Natural killer cell (primary cell): ENCODE measurements at regions of chr6 and their contacts with region 1.

Region 1: DNA sequence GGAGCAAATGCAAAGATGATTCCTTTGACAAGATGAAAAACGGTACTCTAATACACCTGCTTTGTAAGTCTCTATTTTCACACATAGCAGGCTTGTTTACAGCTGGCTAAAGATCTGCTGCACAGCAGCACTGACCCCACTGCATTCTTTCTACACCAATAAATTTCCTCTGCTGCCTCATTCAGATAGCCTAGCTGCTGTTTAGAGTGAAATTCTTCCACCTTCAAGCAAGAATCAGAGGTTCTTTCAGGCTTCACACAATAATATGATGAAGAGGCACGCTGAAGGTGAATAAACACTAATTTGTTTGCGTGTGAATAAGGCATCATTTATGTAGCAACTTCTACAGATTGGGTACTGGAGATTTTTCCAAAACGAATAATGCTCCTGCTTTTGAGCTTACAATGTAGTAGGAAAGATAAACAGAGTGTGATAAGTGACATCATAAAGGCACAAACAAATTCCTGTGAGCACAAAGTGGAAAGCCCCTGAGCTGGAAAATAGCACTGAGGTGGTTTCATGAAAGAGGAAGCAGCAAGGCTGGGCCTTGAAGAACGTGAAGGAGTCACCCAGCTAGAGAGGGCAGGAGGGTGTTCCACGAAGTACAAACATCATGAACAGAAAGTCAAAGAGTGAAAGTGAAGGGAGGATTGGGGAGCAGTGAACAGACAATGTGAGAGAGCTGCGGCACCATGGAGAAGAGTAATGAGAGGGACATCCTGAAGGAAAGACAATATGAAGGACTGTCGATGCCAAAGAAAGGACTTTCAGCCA is 543.4 kb downstream of the CD83 start:
- DNase-seq: peak in 1 of 2 donors; percentile 76
- ATAC-seq: peak; percentile 65 to 75 (median 66)
- H3K4me3 ChIP-seq: no peak overlapping the region
- H3K4me3 Mint-ChIP-seq: no peak overlapping the region
- H3K27ac ChIP-seq: peak overlapping the region; percentile 91
- H3K27ac Mint-ChIP-seq: no peak overlapping the region
- H3K4me1 ChIP-seq: peaks cover 49% of the 10 kb centered on the region
- H3K4me1 Mint-ChIP-seq: peaks cover 27 to 33% of the 10 kb centered on the region in 2 donors
- H3K27me3 ChIP-seq: no peaks in the 10 kb centered on the region
- H3K27me3 Mint-ChIP-seq: peaks cover 10 to 13% of the 10 kb centered on the region in 2 donors
- CTCF ChIP-seq: no peak

Region 2: DNA sequence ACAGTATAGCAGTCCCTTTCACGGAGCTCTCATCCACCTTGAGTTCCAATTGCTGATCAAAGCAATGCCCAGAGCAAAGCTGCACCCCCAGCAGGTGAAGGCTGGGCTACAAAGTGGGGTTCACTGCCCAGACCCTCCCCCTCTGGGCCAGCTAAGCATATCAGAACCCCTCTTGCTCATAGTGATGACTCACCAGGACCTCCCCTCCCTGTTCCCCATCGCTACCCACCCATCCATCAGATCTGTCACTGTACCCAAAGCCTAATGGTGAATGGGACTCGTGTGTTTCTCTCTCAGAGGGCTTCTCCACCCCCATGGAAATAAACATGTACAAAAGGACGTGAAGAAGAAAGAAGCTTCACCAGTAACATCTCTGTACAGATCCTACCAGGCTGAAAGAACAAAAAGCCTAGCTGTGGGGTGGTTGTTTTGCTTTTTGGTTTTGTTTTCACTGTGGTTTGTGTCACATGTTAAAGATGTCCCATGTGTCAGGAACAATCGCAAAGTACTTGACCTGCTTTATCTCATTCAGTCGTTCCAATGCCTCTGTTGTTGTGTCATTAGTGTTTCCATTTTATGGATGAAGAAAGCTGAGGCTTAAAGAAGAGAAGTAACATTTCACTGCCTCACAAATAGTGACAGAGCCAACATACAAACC is 24.9 kb before region 1 on chr6:
- intact Hi-C with region 1: loop called (anchors 2 kb)
- DNase-seq: peak in 1 of 2 donors; percentile 62
- ATAC-seq: peak; percentile 66 to 86 (median 70)
- H3K4me3 ChIP-seq: no peak overlapping the region
- H3K4me3 Mint-ChIP-seq: peak overlapping the region; percentile 84
- H3K27ac ChIP-seq: peak overlapping the region; percentile 50
- H3K27ac Mint-ChIP-seq: peak overlapping the region; percentile 63 to 84
- H3K4me1 ChIP-seq: peaks cover 50% of the 10 kb centered on the region
- H3K4me1 Mint-ChIP-seq: peaks cover 45 to 55% of the 10 kb centered on the region in 2 donors
- H3K27me3 ChIP-seq: no peaks in the 10 kb centered on the region
- H3K27me3 Mint-ChIP-seq: peaks cover 9 to 14% of the 10 kb centered on the region in 2 donors
- CTCF ChIP-seq: no peak

Region 3: DNA sequence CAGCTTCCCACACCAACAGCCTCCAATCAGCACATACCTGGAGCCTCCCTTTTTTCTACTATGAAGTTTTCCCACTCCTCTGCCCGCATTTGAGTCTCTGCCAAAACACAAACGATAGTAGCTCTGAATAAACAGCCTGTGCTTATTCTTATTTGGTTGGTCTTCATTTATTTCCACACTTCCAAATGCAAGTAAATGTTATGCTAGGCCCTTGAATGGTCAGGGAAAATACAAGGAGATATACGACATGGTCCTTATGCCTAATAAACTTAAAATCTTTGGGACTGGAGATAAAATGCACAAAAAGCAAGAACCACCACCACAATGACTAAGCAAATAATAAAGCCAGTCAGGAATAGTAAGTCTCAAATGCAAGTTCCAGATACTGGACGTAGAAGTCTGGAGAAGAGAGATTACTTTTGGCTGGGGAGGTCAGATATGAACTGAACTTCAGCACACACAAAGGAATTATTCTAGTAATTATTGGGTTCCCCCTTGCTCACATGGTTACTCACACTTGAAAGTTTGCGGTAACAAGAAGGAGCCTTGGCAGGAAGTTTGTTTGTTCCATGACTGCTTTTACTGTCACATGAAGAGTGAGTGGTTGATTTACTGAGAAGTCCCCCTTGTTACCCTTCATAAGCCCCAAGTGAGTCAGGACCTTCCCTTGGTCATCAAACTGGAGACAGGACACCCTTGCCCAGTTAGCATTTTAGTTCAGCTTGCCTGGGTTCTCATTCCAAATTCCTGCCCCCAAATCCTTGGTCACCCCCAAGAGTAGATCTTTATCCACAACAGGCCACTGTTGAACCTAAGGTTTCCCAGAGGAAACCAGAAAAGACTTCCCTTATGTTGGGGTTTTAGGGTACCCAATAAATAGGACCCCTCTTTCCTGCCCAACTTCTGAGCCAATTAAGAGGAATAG is 73.7 kb after region 1 on chr6:
- intact Hi-C with region 1: loop called (anchors 2 kb)
- DNase-seq: peak in 1 of 2 donors; percentile 71
- ATAC-seq: peak; percentile 79 to 91 (median 83)
- H3K4me3 ChIP-seq: no peak overlapping the region
- H3K4me3 Mint-ChIP-seq: peak overlapping the region; percentile 80
- H3K27ac ChIP-seq: peak overlapping the region; percentile 64
- H3K27ac Mint-ChIP-seq: peak overlapping the region; percentile 79 to 91
- H3K4me1 ChIP-seq: peaks cover 46% of the 10 kb centered on the region
- H3K4me1 Mint-ChIP-seq: peaks cover 70 to 74% of the 10 kb centered on the region in 2 donors
- H3K27me3 ChIP-seq: no peaks in the 10 kb centered on the region
- H3K27me3 Mint-ChIP-seq: no peaks in the 10 kb centered on the region
- CTCF ChIP-seq: no peak